GM12878 (cell line): ENCODE measurements at regions of chr1 and their contacts with region 1.

Region 1: DNA sequence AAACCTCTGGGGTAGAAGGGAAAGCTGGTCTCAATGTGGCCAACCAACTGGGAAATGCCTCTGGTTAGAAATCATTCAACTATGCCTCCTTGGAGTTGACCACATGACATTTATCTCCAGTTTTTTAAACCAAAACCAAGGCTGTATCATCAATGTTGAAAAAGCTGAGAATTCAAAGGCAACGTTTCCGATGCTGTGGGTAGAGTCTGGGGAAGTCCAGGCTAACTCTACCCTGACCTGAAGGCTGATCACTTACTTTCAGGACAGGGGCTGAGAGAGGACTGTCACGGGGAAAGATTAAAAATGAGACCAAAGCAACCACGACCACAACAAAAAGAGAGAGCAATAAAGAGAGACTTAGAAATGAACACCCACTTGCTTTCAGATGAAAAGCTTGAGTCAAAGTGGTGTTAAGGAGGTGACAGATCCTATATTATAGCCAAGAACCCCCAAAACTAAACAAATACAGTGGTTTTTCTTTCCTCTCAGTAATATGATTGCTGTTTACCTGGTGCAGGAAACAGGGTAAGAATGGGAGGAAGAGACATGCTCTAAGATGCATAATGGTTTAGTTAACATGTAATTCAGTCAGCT is 90.8 kb upstream of the TNFSF4 start:
- DNase-seq: peak; percentile 92
- ATAC-seq: peak; percentile 95
- H3K4me3 ChIP-seq: peak overlapping the region; percentile 1; the same call in 1 of the 2 replicates
- H3K27ac ChIP-seq: peak overlapping the region; percentile 46; the same call in 1 of the 2 replicates
- H3K4me1 ChIP-seq: peaks cover 29% of the 10 kb centered on the region
- H3K27me3 ChIP-seq: no peaks in the 10 kb centered on the region
- CTCF ChIP-seq: no peak
- EP300 ChIP-seq: peak; percentile 85 to 91
- POLR2A ChIP-seq: no peak
- RAD21 ChIP-seq: peak; percentile 25; the same call in 1 of the 2 replicates

Region 2: DNA sequence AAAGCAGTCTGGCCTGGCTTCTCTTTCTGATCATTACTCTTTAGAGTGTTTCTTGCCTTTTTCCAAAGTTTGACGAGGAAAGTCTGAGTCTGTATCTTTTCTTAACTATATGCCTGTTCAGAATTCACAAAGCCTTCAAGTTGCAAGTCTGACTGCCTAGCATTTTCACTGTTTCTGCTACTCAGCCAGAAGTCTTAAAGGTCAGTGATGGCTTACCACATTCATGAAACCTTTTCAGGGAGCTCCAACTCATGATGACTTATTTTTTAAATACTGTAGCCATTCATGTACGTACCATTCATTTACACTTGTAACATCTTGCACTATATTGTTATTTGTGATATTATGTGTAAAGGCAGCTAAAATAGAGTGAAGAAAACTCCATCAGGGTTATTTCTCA is 148.9 kb before region 1 on chr1:
- CTCF ChIA-PET with region 1: no interaction called
- POLR2A ChIA-PET with region 1: no interaction called
- RAD21 ChIA-PET with region 1: no interaction called
- SMC1A ChIA-PET with region 1: no interaction called
- in situ Hi-C with region 1: no loop called
- intact Hi-C with region 1: no loop called
- DNase-seq: no peak
- ATAC-seq: no peak
- H3K4me3 ChIP-seq: no peak overlapping the region
- H3K27ac ChIP-seq: no peak overlapping the region
- H3K4me1 ChIP-seq: no peaks in the 10 kb centered on the region
- H3K27me3 ChIP-seq: 0 out of 4 replicates have a peak, but pooled peaks cover 0 to 1% of the 10 kb centered on the region in 2 experiments
- CTCF ChIP-seq: no peak
- EP300 ChIP-seq: no peak
- POLR2A ChIP-seq: no peak
- RAD21 ChIP-seq: no peak

Region 3: DNA sequence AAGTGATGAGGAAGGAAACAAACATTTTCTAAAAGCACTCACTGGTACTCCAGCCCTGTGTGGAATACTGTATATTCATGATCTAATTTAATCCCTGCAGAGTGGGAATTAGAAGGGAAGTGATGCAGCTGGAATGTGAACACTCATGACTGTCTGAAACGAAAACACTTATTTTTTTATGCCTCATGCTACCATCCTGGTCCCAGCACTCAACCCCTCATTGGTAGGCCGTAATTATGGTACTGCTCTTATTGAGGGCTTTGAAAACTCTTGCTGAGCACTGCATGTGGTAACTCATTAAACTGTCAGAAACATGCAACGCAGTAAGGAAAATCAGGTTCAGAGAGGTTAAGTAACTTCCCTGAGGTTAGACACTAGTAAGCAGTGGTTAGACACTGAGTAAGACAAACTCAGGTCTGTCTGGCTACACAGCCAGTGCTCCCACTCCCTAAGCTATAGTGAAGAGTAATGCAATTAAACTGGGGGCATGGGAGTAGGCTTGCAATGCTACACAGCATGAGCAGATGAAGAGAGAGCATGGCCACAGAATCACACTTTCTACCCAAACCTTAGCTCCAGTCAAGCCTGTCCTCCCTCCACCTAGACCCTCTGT is 73.5 kb before region 1 on chr1:
- CTCF ChIA-PET with region 1: interaction called, 4 read pairs
- POLR2A ChIA-PET with region 1: no interaction called
- RAD21 ChIA-PET with region 1: interaction called, 4 read pairs
- SMC1A ChIA-PET with region 1: interaction called, 11 read pairs
- in situ Hi-C with region 1: no loop called
- intact Hi-C with region 1: no loop called
- DNase-seq: no peak
- ATAC-seq: peak; percentile 13
- H3K4me3 ChIP-seq: no peak overlapping the region
- H3K27ac ChIP-seq: no peak overlapping the region
- H3K4me1 ChIP-seq: peaks cover 38% of the 10 kb centered on the region
- H3K27me3 ChIP-seq: no peaks in the 10 kb centered on the region
- CTCF ChIP-seq: no peak
- EP300 ChIP-seq: no peak
- POLR2A ChIP-seq: no peak
- RAD21 ChIP-seq: no peak

Region 4: GRCh38 chr1:173267453-173267945 is 30.4 kb before region 1 on chr1:
- CTCF ChIA-PET with region 1: interaction called, 3 read pairs
- POLR2A ChIA-PET with region 1: no interaction called
- RAD21 ChIA-PET with region 1: no interaction called
- SMC1A ChIA-PET with region 1: interaction called, 10 read pairs
- in situ Hi-C with region 1: no loop called
- intact Hi-C with region 1: no loop called
- DNase-seq: peak; percentile 16
- ATAC-seq: peak; percentile 88
- H3K4me3 ChIP-seq: no peak overlapping the region
- H3K27ac ChIP-seq: no peak overlapping the region
- H3K4me1 ChIP-seq: no peaks in the 10 kb centered on the region; the same call in 1 of the 2 replicates
- H3K27me3 ChIP-seq: no peaks in the 10 kb centered on the region
- CTCF ChIP-seq: no peak
- EP300 ChIP-seq: no peak
- POLR2A ChIP-seq: no peak
- RAD21 ChIP-seq: no peak

Region 5: GRCh38 chr1:173330149-173330951 is 32.5 kb after region 1 on chr1:
- CTCF ChIA-PET with region 1: interaction called, 9 read pairs
- POLR2A ChIA-PET with region 1: interaction called, 3 read pairs
- RAD21 ChIA-PET with region 1: interaction called, 7 read pairs
- SMC1A ChIA-PET with region 1: interaction called, 11 read pairs
- in situ Hi-C with region 1: no loop called
- intact Hi-C with region 1: loop called (anchors 5 kb)
- DNase-seq: no peak
- ATAC-seq: peak; percentile 28
- H3K4me3 ChIP-seq: no peak overlapping the region
- H3K27ac ChIP-seq: peak overlapping the region; percentile 83
- H3K4me1 ChIP-seq: peaks cover 36% of the 10 kb centered on the region
- H3K27me3 ChIP-seq: no peaks in the 10 kb centered on the region
- CTCF ChIP-seq: no peak
- EP300 ChIP-seq: no peak
- POLR2A ChIP-seq: no peak
- RAD21 ChIP-seq: no peak

Region 6: GRCh38 chr1:173503391-173503790 is 205.5 kb after region 1 on chr1:
- CTCF ChIA-PET with region 1: no interaction called
- POLR2A ChIA-PET with region 1: no interaction called
- RAD21 ChIA-PET with region 1: no interaction called
- SMC1A ChIA-PET with region 1: no interaction called
- in situ Hi-C with region 1: no loop called
- intact Hi-C with region 1: no loop called
- DNase-seq: no peak
- ATAC-seq: peak; percentile 62; the same call in 2 of the 3 replicates
- H3K4me3 ChIP-seq: no peak overlapping the region
- H3K27ac ChIP-seq: no peak overlapping the region
- H3K4me1 ChIP-seq: no peaks in the 10 kb centered on the region
- H3K27me3 ChIP-seq: no peaks in the 10 kb centered on the region
- CTCF ChIP-seq: no peak
- EP300 ChIP-seq: no peak
- POLR2A ChIP-seq: no peak
- RAD21 ChIP-seq: no peak